Dorsolateral prefrontal cortex (tissue), 120 donors: ENCODE measurements at regions of chr20 and their contacts with region 1.

Region 1: GRCh38 chr20:31236953-31237352 is 20.5 kb upstream of the DEFB115 start:
- DNase-seq: no peak
- H3K4me3 ChIP-seq: no peak overlapping the region
- H3K27ac ChIP-seq: no peak overlapping the region
- H3K27me3 ChIP-seq: no peaks in the 10 kb centered on the region
- CTCF ChIP-seq: no peak

Region 2: GRCh38 chr20:31274441-31274840 is 37.5 kb after region 1 on chr20:
- intact Hi-C with region 1: loop called in 1 of 2 experiments (anchors 5 kb)
- DNase-seq: no peak
- H3K4me3 ChIP-seq: no peak overlapping the region
- H3K27ac ChIP-seq: no peak overlapping the region
- H3K27me3 ChIP-seq: peaks cover 0 to 14% (median 0%) of the 10 kb centered on the region in 45 donors
- CTCF ChIP-seq: no peak